ENCODE measurements at regions of chr5 and their contacts with region 1.

Region 1: GRCh38 chr5:16456103-16456832 is 9.3 kb downstream of the ZNF622 start:
- DNase-seq: peak in 1 of 2 donors; percentile 67
- ATAC-seq: peak; percentile 61 to 84
- H3K4me3 ChIP-seq: no peak overlapping the region
- H3K27ac ChIP-seq: peak overlapping the region; percentile 68 to 92 (median 76)
- H3K4me1 ChIP-seq: peaks cover 67 to 71% of the 10 kb centered on the region in 2 donors
- H3K27me3 ChIP-seq: no peaks in the 10 kb centered on the region
- CTCF ChIP-seq: peak; percentile 34 to 79 (median 73)
- POLR2A ChIP-seq: peak in 1 of 2 donors; percentile 6

Region 2: DNA sequence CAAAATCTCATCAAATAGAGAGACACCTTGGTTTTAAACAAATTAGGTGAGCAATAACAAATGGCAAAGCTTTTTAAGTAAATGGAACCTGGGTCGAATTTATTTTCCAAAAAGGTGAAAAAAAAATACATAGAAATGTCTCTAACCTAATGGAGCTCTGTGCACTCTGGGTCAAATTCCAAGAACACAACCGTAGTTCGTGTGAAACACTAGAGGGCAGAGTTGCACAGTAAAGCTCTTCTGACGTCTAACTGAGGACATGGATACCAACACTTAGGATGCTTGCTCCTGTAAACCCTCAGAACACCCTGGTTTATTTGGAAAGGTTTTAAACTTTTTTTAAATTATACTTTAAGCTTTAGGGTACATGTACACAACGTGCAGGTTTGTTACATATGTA is 295.6 kb before region 1 on chr5:
- in situ Hi-C with region 1: no loop called
- intact Hi-C with region 1: loop called (anchors 2 kb)
- DNase-seq: no peak
- ATAC-seq: peak in 1 of 2 donors; percentile 71
- H3K4me3 ChIP-seq: no peak overlapping the region
- H3K27ac ChIP-seq: no peak overlapping the region
- H3K4me1 ChIP-seq: no peaks in the 10 kb centered on the region
- H3K27me3 ChIP-seq: no peaks in the 10 kb centered on the region
- CTCF ChIP-seq: peak in 3 of 5 experiments; percentile 32 to 54 (median 47)
- POLR2A ChIP-seq: no peak

Region 3: GRCh38 chr5:16552666-16553343 is 96.5 kb after region 1 on chr5:
- in situ Hi-C with region 1: loop called in 1 of 4 experiments (anchors 5 kb)
- intact Hi-C with region 1: loop called (anchors 2 kb)
- DNase-seq: peak; percentile 75 to 86
- ATAC-seq: peak; percentile 67 to 81
- H3K4me3 ChIP-seq: no peak overlapping the region
- H3K27ac ChIP-seq: peak overlapping the region; percentile 90 to 97 (median 94)
- H3K4me1 ChIP-seq: peaks cover 22 to 25% of the 10 kb centered on the region in 2 donors
- H3K27me3 ChIP-seq: no peaks in the 10 kb centered on the region
- CTCF ChIP-seq: peak; percentile 75 to 84 (median 81)
- POLR2A ChIP-seq: no peak

Region 4: GRCh38 chr5:16585041-16585667 is 128.9 kb after region 1 on chr5:
- in situ Hi-C with region 1: no loop called
- intact Hi-C with region 1: no loop called
- DNase-seq: no peak
- ATAC-seq: peak; percentile 27 to 59
- H3K4me3 ChIP-seq: no peak overlapping the region
- H3K27ac ChIP-seq: no peak overlapping the region
- H3K4me1 ChIP-seq: no peaks in the 10 kb centered on the region
- H3K27me3 ChIP-seq: no peaks in the 10 kb centered on the region
- CTCF ChIP-seq: peak in 3 of 5 experiments; percentile 29 to 50 (median 35)
- POLR2A ChIP-seq: no peak

Region 5: GRCh38 chr5:16666883-16667398 is 210.7 kb after region 1 on chr5:
- in situ Hi-C with region 1: no loop called
- intact Hi-C with region 1: loop called (anchors 5 kb)
- DNase-seq: peak in 1 of 2 donors; percentile 16
- ATAC-seq: peak; percentile 49 to 66
- H3K4me3 ChIP-seq: no peak overlapping the region
- H3K27ac ChIP-seq: peak overlapping the region in 1 of 4 donors; percentile 18
- H3K4me1 ChIP-seq: peaks cover 4 to 8% of the 10 kb centered on the region in 2 donors
- H3K27me3 ChIP-seq: no peaks in the 10 kb centered on the region
- CTCF ChIP-seq: peak; percentile 33 to 58 (median 44)
- POLR2A ChIP-seq: no peak

Region 6: GRCh38 chr5:16776611-16777251 is 320.5 kb after region 1 on chr5:
- in situ Hi-C with region 1: loop called in 2 of 4 experiments (anchors 25 kb)
- intact Hi-C with region 1: loop called (anchors 10 kb)
- DNase-seq: peak; percentile 87 to 93
- ATAC-seq: peak; percentile 89 to 93
- H3K4me3 ChIP-seq: no peak overlapping the region
- H3K27ac ChIP-seq: peak overlapping the region; percentile 80 to 88 (median 82)
- H3K4me1 ChIP-seq: peaks cover 29 to 34% of the 10 kb centered on the region in 2 donors
- H3K27me3 ChIP-seq: no peaks in the 10 kb centered on the region
- CTCF ChIP-seq: peak; percentile 55 to 78 (median 67)
- POLR2A ChIP-seq: no peak